ENCODE measurements at regions of chr7 and their contacts with region 1.

Region 1: DNA sequence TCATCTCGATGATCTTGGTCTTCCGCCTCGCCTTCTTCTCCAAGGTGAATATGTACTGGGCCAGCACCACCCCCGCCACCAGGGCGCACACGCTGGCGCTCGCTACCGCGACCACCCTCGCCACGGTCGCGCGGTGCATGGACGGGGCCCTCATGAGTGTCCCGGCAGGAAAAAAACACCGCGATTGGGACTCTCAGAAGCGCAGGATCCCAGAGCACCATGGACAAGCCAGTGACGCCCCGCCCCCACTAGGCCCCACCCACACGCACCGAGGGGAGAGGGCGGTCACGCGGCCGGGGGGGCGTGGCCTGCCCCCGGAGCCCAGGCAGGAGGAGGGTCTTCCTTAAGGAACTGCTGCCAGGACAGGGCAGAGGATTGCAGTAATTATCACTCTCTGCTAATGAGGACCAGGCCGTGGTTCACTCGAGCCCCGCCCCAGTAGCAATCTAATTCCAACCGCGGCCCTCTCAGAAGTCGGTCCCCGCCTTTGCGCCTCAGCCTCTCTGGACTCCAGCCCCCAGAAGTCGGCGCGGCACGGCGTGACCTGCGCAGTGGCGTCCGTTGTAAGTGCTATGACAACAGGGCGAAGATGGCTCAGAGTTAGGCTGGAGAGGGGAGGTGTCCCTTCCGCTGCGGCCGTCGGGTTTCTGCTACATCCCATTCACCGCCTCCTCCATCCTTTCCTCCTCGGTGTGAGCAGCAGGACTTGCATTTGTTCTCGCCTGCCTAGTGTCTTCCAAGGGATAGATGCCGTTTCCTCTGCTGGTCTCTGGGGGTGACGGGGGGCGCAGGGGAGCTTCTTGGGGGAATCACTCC is at the start of gene BBS9:
- DNase-seq: peak; percentile 83 to 90 (median 88)
- ATAC-seq: peak; percentile 97
- H3K4me3 ChIP-seq: peak within 1 kb of the TSS; percentile 80
- H3K4me3 Mint-ChIP-seq: peak within 1 kb of the TSS; percentile 94 to 99 (median 97)
- H3K27ac ChIP-seq: peak within 1 kb of the TSS; percentile 78
- H3K27ac Mint-ChIP-seq: peak within 1 kb of the TSS; percentile 84 to 97 (median 91)
- H3K4me1 ChIP-seq: peaks cover 6 to 9% of the 10 kb centered on the region in 2 donors
- H3K4me1 Mint-ChIP-seq: peaks cover 13 to 36% (median 25%) of the 10 kb centered on the region in 7 donors
- H3K27me3 ChIP-seq: no peaks in the 10 kb centered on the region
- H3K27me3 Mint-ChIP-seq: peaks cover 0 to 18% (median 0%) of the 10 kb centered on the region in 5 donors
- total RNA-seq, gene BBS9: 11.7 to 31.0 (median 28.3) TPM

Region 2: GRCh38 chr7:32490127-32490822 is 638.9 kb before region 1 on chr7 and contains the start of gene LSM5:
- CTCF ChIA-PET with region 1: no interaction called
- POLR2A ChIA-PET with region 1: no interaction called
- intact Hi-C with region 1: loop called (anchors 1 kb)
- DNase-seq: peak; percentile 77 to 91 (median 89)
- ATAC-seq: peak; percentile 84
- H3K4me3 ChIP-seq: peak within 1 kb of the TSS; percentile 86
- H3K4me3 Mint-ChIP-seq: peak within 1 kb of the TSS; percentile 83 to 98 (median 92)
- H3K27ac ChIP-seq: peak within 1 kb of the TSS; percentile 87
- H3K27ac Mint-ChIP-seq: peak within 1 kb of the TSS; percentile 90 to 98 (median 96)
- H3K4me1 ChIP-seq: peaks cover 8 to 13% of the 10 kb centered on the region in 2 donors
- H3K4me1 Mint-ChIP-seq: peaks cover 12 to 43% (median 31%) of the 10 kb centered on the region in 7 donors
- H3K27me3 ChIP-seq: no peaks in the 10 kb centered on the region
- H3K27me3 Mint-ChIP-seq: no peaks in the 10 kb centered on the region
- total RNA-seq, gene LSM5: 21.5 to 58.8 (median 39.4) TPM

Region 3: GRCh38 chr7:32680259-32681173 is 448.7 kb before region 1 on chr7:
- CTCF ChIA-PET with region 1: no interaction called
- POLR2A ChIA-PET with region 1: no interaction called
- intact Hi-C with region 1: no loop called
- DNase-seq: no peak
- ATAC-seq: no peak
- H3K4me3 ChIP-seq: no peak overlapping the region
- H3K4me3 Mint-ChIP-seq: no peak overlapping the region
- H3K27ac ChIP-seq: no peak overlapping the region
- H3K27ac Mint-ChIP-seq: no peak overlapping the region
- H3K4me1 ChIP-seq: no peaks in the 10 kb centered on the region
- H3K4me1 Mint-ChIP-seq: no peaks in the 10 kb centered on the region
- H3K27me3 ChIP-seq: no peaks in the 10 kb centered on the region
- H3K27me3 Mint-ChIP-seq: peaks cover 0 to 21% (median 0%) of the 10 kb centered on the region in 5 donors

Region 4: GRCh38 chr7:32846701-32847100 is 282.5 kb before region 1 on chr7:
- CTCF ChIA-PET with region 1: no interaction called
- POLR2A ChIA-PET with region 1: no interaction called
- intact Hi-C with region 1: loop called in 1 of 2 experiments (anchors 5 kb)
- DNase-seq: peak; percentile 77 to 89 (median 86)
- ATAC-seq: peak; percentile 100
- H3K4me3 ChIP-seq: no peak overlapping the region
- H3K4me3 Mint-ChIP-seq: peak overlapping the region in 6 of 10 donors; percentile 15 to 42 (median 30)
- H3K27ac ChIP-seq: no peak overlapping the region
- H3K27ac Mint-ChIP-seq: peak overlapping the region in 1 of 9 donors; percentile 33
- H3K4me1 ChIP-seq: peaks cover 7% of the 10 kb centered on the region in 2 donors
- H3K4me1 Mint-ChIP-seq: peaks cover 6 to 10% (median 9%) of the 10 kb centered on the region in 7 donors
- H3K27me3 ChIP-seq: peaks cover 0 to under 1% of the 10 kb centered on the region in 2 donors
- H3K27me3 Mint-ChIP-seq: peaks cover 12 to 44% (median 23%) of the 10 kb centered on the region in 5 donors

Region 5: GRCh38 chr7:33040803-33041516 is 88.2 kb before region 1 on chr7:
- CTCF ChIA-PET with region 1: no interaction called
- POLR2A ChIA-PET with region 1: interaction called, 5 read pairs
- intact Hi-C with region 1: loop called (anchors 1 kb)
- DNase-seq: peak in 8 of 9 donors; percentile 44 to 90 (median 78)
- ATAC-seq: peak; percentile 99
- H3K4me3 ChIP-seq: peak overlapping the region; percentile 40
- H3K4me3 Mint-ChIP-seq: peak overlapping the region; percentile 71 to 89 (median 84)
- H3K27ac ChIP-seq: peak overlapping the region; percentile 80
- H3K27ac Mint-ChIP-seq: peak overlapping the region; percentile 75 to 95 (median 90)
- H3K4me1 ChIP-seq: peaks cover 3 to 22% of the 10 kb centered on the region in 2 donors
- H3K4me1 Mint-ChIP-seq: peaks cover 18 to 72% (median 65%) of the 10 kb centered on the region in 7 donors
- H3K27me3 ChIP-seq: no peaks in the 10 kb centered on the region
- H3K27me3 Mint-ChIP-seq: no peaks in the 10 kb centered on the region

Region 6: GRCh38 chr7:33062782-33063443 is 66.3 kb before region 1 on chr7:
- CTCF ChIA-PET with region 1: no interaction called
- POLR2A ChIA-PET with region 1: interaction called, 9 read pairs
- intact Hi-C with region 1: loop called (anchors 1 kb)
- DNase-seq: peak; percentile 90 to 95 (median 93)
- ATAC-seq: peak; percentile 97
- H3K4me3 ChIP-seq: peak overlapping the region; percentile 96
- H3K4me3 Mint-ChIP-seq: peak overlapping the region; percentile 91 to 98 (median 96)
- H3K27ac ChIP-seq: peak overlapping the region; percentile 82
- H3K27ac Mint-ChIP-seq: peak overlapping the region; percentile 92 to 99 (median 96)
- H3K4me1 ChIP-seq: peaks cover 23 to 32% of the 10 kb centered on the region in 2 donors
- H3K4me1 Mint-ChIP-seq: peaks cover 20 to 50% (median 39%) of the 10 kb centered on the region in 7 donors
- H3K27me3 ChIP-seq: no peaks in the 10 kb centered on the region
- H3K27me3 Mint-ChIP-seq: peaks cover 0 to 14% (median 0%) of the 10 kb centered on the region in 5 donors

Region 7: GRCh38 chr7:33185786-33186185 is 56.6 kb after region 1 on chr7:
- CTCF ChIA-PET with region 1: no interaction called
- POLR2A ChIA-PET with region 1: no interaction called
- intact Hi-C with region 1: no loop called
- DNase-seq: peak in 5 of 9 donors; percentile 22 to 40 (median 33)
- ATAC-seq: peak; percentile 61
- H3K4me3 ChIP-seq: no peak overlapping the region
- H3K4me3 Mint-ChIP-seq: no peak overlapping the region
- H3K27ac ChIP-seq: no peak overlapping the region
- H3K27ac Mint-ChIP-seq: no peak overlapping the region
- H3K4me1 ChIP-seq: peaks cover 0 to 2% of the 10 kb centered on the region in 2 donors
- H3K4me1 Mint-ChIP-seq: peaks cover 3 to 12% (median 7%) of the 10 kb centered on the region in 7 donors
- H3K27me3 ChIP-seq: no peaks in the 10 kb centered on the region
- H3K27me3 Mint-ChIP-seq: no peaks in the 10 kb centered on the region